Common myeloid progenitor, CD34-positive (primary cell): ENCODE measurements at regions of chr16 and their contacts with region 1.

Region 1: GRCh38 chr16:81817789-81818567 is 38.9 kb downstream of the PLCG2 start:
- DNase-seq: peak in 2 of 3 donors; percentile 64 to 79
- H3K4me3 ChIP-seq: no peak overlapping the region
- H3K27ac ChIP-seq: no peak overlapping the region
- H3K4me1 ChIP-seq: peaks cover 12 to 87% (median 38%) of the 10 kb centered on the region in 4 experiments
- H3K27me3 ChIP-seq: no peaks in the 10 kb centered on the region

Region 2: GRCh38 chr16:81798311-81799137 is 19.5 kb before region 1 on chr16:
- CTCF ChIA-PET with region 1: interaction called, 11 read pairs
- POLR2A ChIA-PET with region 1: no interaction called
- DNase-seq: peak in 2 of 3 donors; percentile 51 to 65
- H3K4me3 ChIP-seq: peak overlapping the region in 4 of 7 experiments; percentile 4 to 44 (median 31)
- H3K27ac ChIP-seq: peak overlapping the region; percentile 54 to 85
- H3K4me1 ChIP-seq: peaks cover 18 to 43% (median 42%) of the 10 kb centered on the region in 4 experiments
- H3K27me3 ChIP-seq: no peaks in the 10 kb centered on the region

Region 3: GRCh38 chr16:81807767-81808358 is 10.1 kb before region 1 on chr16:
- CTCF ChIA-PET with region 1: interaction called, 10 read pairs
- POLR2A ChIA-PET with region 1: interaction called, 3 read pairs
- DNase-seq: no peak
- H3K4me3 ChIP-seq: no peak overlapping the region
- H3K27ac ChIP-seq: no peak overlapping the region
- H3K4me1 ChIP-seq: peaks cover 0 to 28% (median 11%) of the 10 kb centered on the region in 4 experiments
- H3K27me3 ChIP-seq: no peaks in the 10 kb centered on the region

Region 4: DNA sequence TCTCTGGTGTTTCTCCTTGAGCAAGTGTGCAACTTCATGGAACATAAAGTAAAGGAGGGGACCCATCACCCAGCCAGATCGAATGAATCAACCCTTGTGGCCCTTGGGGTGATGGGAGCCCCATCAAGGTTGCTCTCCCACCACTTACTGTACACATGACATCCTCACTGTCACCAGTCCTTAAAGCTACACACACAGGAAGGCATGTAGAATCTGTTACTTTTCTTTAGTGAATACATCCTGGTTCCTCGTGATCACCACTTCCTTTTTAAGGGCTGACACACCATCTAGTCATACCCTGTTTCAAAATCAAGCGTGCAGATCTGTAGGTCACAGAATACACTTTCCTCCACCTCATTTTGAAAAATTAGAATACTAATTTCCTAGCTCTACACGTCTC is 374.7 kb after region 1 on chr16:
- CTCF ChIA-PET with region 1: no interaction called
- POLR2A ChIA-PET with region 1: no interaction called
- DNase-seq: peak; percentile 36 to 78 (median 72)
- H3K4me3 ChIP-seq: no peak overlapping the region
- H3K27ac ChIP-seq: peak overlapping the region in 1 of 2 experiments; percentile 15
- H3K4me1 ChIP-seq: peaks cover 0 to 5% (median 3%) of the 10 kb centered on the region in 4 experiments
- H3K27me3 ChIP-seq: peaks cover 0 to 5% (median 3%) of the 10 kb centered on the region in 5 experiments